WTC11 (cell line): ENCODE measurements at regions of chr1 and their contacts with region 1.

Region 1: DNA sequence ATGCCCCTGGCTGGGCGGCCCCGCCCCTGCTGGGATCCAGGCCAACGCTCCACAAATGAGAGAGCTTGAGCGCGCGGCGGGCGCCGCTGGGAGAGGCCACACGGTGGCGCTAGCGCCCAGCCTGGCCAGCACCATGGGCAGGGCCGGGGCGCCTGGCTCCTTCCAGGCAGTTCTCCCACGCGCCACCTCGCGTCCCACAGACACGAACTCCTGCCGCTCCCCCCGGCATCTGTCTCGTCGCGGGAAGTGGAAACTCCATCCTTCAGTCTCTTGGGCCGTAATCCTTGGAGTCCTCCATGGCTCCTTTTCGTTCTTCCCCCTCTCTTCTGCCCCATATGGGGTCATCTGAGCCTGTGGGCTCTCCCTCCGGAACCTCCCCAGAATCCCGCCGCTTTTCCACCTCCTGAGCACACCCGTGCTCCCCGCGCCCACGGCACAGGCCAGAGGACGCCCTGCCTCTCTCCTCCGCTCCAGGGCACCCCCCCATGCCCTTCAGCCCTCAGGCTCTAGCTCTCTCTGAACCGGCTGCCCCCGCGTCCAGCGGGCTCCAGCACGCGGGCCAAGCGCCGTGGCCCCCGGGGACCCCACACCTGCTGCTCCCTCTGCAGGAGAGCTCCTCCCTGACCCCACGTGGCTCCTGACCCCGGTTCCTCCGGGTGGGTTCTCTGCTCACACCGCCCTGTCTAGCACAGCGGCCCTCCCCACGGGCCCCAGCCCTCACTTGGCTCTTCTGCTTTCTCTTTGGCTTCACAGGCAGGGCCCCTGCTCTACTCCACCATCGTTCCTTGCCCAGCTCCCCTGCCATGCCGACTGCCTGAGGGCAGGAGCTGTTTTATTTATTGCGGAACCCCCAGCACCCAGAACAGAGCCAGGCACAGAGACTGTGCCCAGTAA is 31.9 kb upstream of the EDN2 start:
- DNase-seq: peak; percentile 90
- ATAC-seq: peak; percentile 85
- H3K4me3 Mint-ChIP-seq: peak overlapping the region; percentile 63
- H3K27ac Mint-ChIP-seq: no peak overlapping the region
- H3K4me1 Mint-ChIP-seq: peaks cover 12% of the 10 kb centered on the region
- H3K27me3 Mint-ChIP-seq: peaks cover 15% of the 10 kb centered on the region
- CTCF ChIP-seq: peak; percentile 60; the same call in 1 of the 2 replicates

Region 2: DNA sequence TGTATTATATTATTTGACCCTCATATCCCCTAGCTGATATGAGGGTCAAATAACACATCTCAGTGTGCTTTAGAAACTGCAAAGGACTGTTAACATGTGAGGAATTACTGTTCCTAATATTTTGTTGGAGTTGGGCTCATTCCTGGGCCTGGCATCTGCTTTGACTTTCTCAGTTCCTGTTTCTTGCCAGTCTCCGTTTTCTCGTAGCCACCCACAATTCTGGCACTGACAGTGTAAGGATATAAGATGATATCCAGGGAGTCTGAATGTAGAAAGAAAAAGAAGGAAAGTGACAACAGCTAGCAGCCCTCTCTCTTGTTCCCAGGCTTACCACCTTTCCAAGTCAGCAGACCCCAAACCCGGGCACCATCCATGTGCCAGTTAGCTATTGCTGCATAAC is 219.9 kb before region 1 on chr1:
- CTCF ChIA-PET with region 1: no interaction called
- POLR2A ChIA-PET with region 1: no interaction called
- DNase-seq: no peak
- ATAC-seq: no peak
- H3K4me3 Mint-ChIP-seq: no peak overlapping the region
- H3K27ac Mint-ChIP-seq: no peak overlapping the region
- H3K4me1 Mint-ChIP-seq: no peaks in the 10 kb centered on the region
- H3K27me3 Mint-ChIP-seq: no peaks in the 10 kb centered on the region; the same call in 1 of the 2 replicates
- CTCF ChIP-seq: no peak

Region 3: DNA sequence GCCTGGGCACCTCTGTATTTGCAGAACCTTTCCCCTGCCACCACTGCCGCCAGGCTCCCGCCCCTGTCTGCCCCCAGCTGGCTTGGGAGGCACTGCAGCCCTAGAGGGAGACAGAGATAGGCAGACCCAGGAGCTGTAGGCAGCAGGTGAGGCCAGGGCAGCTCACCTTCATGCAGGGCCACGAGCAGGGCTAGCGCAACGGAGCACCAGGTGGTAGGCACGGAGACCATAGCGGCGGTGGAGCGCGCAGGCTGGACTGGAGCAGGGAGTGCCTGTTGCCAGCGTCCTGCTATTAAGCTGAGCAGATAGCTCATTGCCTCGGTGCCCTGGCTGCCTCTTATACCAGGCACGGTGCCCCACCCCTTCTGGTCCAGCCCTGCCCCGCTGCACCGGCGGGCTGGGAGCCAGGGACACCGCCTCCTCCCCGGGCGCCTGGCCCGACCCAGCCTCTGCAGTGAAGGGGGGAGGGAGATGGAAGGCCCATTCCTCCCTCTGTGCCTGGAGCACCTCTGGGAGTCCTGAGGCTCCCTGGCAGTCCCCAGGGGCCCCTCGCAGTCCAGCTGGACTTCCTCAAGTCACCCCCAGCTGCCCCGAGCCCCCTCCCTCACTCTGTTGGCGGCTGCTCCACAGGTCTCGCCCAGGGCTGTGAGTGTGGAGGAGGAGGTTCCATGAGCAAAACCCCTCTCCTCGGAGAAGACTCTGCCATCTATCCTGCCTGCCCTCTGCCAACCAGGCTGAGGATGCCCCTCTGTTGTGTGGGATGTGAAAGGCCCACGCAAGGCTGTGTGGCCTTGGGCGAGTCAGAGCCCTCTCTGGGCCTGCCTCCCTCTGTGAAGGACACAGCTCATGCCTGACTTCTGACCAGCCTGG is 31.8 kb before region 1 on chr1 and contains the start of gene EDN2:
- CTCF ChIA-PET with region 1: interaction called, 84 read pairs
- POLR2A ChIA-PET with region 1: no interaction called
- DNase-seq: peak; percentile 55
- ATAC-seq: peak; percentile 65
- H3K4me3 Mint-ChIP-seq: no peak within 1 kb of the TSS
- H3K27ac Mint-ChIP-seq: no peak within 1 kb of the TSS
- H3K4me1 Mint-ChIP-seq: peaks cover 44% of the 10 kb centered on the region
- H3K27me3 Mint-ChIP-seq: peaks cover 14% of the 10 kb centered on the region; the same call in 1 of the 2 replicates
- CTCF ChIP-seq: no peak
- total RNA-seq, gene EDN2: 0.33 to 0.39 TPM in 2 of 3 replicates, not detected in the other

Region 4: DNA sequence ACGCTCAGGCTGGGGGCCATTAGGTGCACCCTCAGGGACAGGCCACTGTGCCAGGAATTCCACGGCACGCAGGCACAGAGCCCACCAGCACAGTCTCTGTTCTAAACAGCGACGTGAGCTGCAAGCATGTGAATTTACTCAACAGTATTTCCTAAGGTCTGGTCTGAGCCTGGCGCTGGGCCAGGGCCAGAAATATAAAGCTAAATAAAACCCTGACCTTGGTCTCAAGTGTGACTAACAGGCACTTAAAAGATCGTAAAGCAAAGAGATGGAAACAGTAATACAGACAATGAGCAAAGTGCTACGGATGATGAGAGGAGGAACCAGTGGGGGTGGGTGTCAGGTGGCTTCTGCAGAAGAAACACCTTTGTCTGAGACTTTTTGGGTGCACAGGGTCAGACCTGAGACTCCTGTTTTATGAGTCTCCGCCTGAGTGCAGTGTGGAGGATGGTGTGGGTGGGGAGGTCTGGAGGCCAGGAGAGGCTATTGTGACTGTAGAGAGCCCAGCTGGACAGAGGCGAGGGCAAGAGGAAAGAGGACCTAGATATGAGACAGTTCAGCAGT is 21.5 kb after region 1 on chr1:
- CTCF ChIA-PET with region 1: interaction called, 22 read pairs
- POLR2A ChIA-PET with region 1: no interaction called
- DNase-seq: no peak
- ATAC-seq: no peak
- H3K4me3 Mint-ChIP-seq: no peak overlapping the region
- H3K27ac Mint-ChIP-seq: no peak overlapping the region
- H3K4me1 Mint-ChIP-seq: no peaks in the 10 kb centered on the region
- H3K27me3 Mint-ChIP-seq: no peaks in the 10 kb centered on the region; the same call in 1 of the 2 replicates
- CTCF ChIP-seq: no peak

Region 5: GRCh38 chr1:41573785-41574713 is 57.6 kb after region 1 on chr1:
- CTCF ChIA-PET with region 1: interaction called, 29 read pairs
- POLR2A ChIA-PET with region 1: no interaction called
- DNase-seq: peak; percentile 81
- ATAC-seq: peak; percentile 95
- H3K4me3 Mint-ChIP-seq: no peak overlapping the region
- H3K27ac Mint-ChIP-seq: no peak overlapping the region
- H3K4me1 Mint-ChIP-seq: no peaks in the 10 kb centered on the region
- H3K27me3 Mint-ChIP-seq: peaks cover 3% of the 10 kb centered on the region
- CTCF ChIP-seq: peak; percentile 81

Region 6: GRCh38 chr1:41599912-41600311 is 83.5 kb after region 1 on chr1:
- CTCF ChIA-PET with region 1: no interaction called
- POLR2A ChIA-PET with region 1: no interaction called
- DNase-seq: no peak
- ATAC-seq: peak; percentile 70
- H3K4me3 Mint-ChIP-seq: no peak overlapping the region
- H3K27ac Mint-ChIP-seq: no peak overlapping the region
- H3K4me1 Mint-ChIP-seq: no peaks in the 10 kb centered on the region; the same call in 1 of the 2 replicates
- H3K27me3 Mint-ChIP-seq: no peaks in the 10 kb centered on the region
- CTCF ChIP-seq: no peak